A549 (cell line): ENCODE measurements at regions of chr15 and their contacts with region 1.

Region 1: DNA sequence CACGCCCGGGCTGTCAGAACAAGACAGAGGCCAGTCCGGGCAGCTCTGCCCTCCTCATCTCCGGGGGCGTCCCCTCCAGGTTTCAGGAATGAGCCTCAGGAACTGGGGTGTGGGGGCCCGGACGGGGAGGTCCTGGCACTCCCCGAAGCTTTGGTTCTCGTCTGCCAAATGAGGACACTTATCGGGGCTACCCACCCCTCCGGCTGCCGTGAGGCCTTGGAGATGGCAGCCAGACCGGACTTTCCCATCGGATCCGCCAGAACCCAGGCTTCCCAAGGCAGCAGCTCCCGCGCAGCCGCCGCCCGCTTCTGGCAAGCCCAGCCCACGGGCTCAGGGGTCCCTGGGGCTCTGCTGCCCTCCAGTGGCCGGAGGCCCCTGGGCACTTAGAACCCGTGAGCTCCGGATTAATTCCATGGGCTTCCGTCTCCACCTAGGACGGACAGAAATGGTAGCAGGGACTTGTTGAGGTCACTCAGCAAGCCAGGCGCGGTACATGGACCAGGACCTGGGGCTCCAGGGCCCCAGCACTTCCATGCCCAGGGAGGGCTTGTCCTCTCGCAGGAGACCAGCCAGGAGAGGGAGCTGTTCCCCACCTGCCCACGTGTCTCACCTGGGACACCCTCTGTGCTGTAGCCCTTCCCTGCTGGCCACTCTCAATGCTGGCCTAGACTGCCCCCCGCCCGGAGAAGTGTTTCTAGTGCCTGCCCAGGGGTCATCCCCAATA is 89.4 kb downstream of the LINGO1 start:
- DNase-seq: peak; percentile 89 to 97
- ATAC-seq: peak; percentile 82 to 95
- H3K4me3 ChIP-seq: peak overlapping the region; percentile 57
- H3K27ac ChIP-seq: peak overlapping the region; percentile 79 to 93
- H3K4me1 ChIP-seq: peaks cover 18% of the 10 kb centered on the region
- CTCF ChIP-seq: peak; percentile 100
- EP300 ChIP-seq: no peak
- POLR2A ChIP-seq: peak; percentile 83
- RAD21 ChIP-seq: peak; percentile 89 to 93

Region 2: DNA sequence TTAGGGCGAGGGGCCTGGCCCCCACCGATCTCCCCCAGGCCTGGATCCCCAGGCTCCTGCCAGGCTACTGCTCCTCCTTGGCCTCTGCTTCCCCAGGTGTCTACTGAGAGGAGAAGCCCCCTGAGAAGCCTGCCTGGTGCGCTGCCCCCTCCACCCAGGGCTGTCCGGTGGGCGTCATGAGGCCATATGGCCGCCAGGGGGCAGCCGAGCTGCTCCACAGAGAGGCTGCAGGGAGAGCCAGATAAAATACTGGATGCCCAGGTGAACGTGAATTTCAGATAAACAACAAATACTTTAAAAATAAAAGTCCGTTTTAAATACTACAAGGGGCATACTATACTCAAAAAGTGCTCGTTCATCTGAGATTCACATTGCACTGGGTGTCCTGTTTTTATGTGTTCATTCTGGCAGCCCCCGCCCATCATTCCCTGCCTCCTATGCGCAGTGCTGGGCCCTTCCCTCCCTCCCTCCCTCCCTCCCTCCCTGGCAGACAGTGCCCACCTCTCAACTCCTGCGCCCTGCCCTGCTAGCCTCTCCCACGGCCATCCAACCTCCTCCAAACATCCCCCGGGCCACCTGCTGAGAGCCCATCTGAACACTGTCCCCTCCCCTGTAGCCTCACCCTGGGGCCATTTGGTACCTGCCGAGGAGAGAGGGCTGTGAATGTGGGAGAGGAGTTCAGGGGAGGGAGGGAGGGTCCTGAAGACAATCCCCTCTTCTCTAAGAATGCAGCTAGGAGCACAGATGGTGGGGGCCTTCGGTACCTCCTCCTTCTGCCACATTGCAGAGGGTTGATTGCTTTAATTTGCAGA is 518.8 kb before region 1 on chr15:
- CTCF ChIA-PET with region 1: interaction called, 15 read pairs
- POLR2A ChIA-PET with region 1: no interaction called
- DNase-seq: peak; percentile 53 to 91
- ATAC-seq: peak; percentile 38 to 83; a peak in 3 of 6 replicates
- H3K4me3 ChIP-seq: no peak overlapping the region
- H3K27ac ChIP-seq: no peak overlapping the region
- H3K4me1 ChIP-seq: no peaks in the 10 kb centered on the region
- CTCF ChIP-seq: peak; percentile 95
- EP300 ChIP-seq: no peak
- POLR2A ChIP-seq: no peak
- RAD21 ChIP-seq: peak; percentile 85 to 88

Region 3: DNA sequence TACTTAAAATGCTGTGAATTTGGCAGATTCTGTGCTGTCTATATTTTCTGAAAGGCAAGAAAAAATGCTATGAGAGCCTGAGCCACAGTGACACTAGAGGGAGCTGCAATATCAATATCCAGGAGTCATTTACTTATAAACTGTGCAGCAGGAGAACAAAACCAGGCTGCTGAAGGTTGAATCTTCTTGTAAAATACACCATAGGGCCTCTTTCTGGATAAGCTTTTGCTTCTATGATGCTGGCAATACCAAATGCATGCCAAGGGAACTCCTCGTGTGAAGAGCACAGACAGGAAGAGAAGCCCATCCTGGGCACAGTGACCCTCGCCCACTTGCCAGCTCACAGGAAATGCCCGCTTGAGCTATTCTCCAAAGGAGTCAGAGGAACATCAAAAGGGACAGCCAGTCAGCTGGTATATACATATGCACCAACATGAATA is 424.4 kb before region 1 on chr15:
- CTCF ChIA-PET with region 1: interaction called, 88 read pairs
- POLR2A ChIA-PET with region 1: no interaction called
- DNase-seq: peak; percentile 64 to 74
- ATAC-seq: peak; percentile 83 to 93
- H3K4me3 ChIP-seq: no peak overlapping the region
- H3K27ac ChIP-seq: no peak overlapping the region
- H3K4me1 ChIP-seq: no peaks in the 10 kb centered on the region
- CTCF ChIP-seq: peak; percentile 96
- EP300 ChIP-seq: no peak
- POLR2A ChIP-seq: no peak
- RAD21 ChIP-seq: peak; percentile 93

Region 4: GRCh38 chr15:77496710-77497103 is 46.6 kb before region 1 on chr15:
- CTCF ChIA-PET with region 1: interaction called, 66 read pairs
- POLR2A ChIA-PET with region 1: interaction called, 3 read pairs
- DNase-seq: peak; percentile 75 to 89
- ATAC-seq: peak; percentile 84 to 97
- H3K4me3 ChIP-seq: no peak overlapping the region
- H3K27ac ChIP-seq: peak overlapping the region in 1 of 2 experiments; percentile 41; a peak in 3 of 6 replicates
- H3K4me1 ChIP-seq: peaks cover 11% of the 10 kb centered on the region; the same call in 2 of the 3 replicates
- CTCF ChIP-seq: peak; percentile 97
- EP300 ChIP-seq: no peak
- POLR2A ChIP-seq: no peak
- RAD21 ChIP-seq: peak; percentile 95 to 97

Region 5: GRCh38 chr15:77526791-77527778 is 16.2 kb before region 1 on chr15:
- CTCF ChIA-PET with region 1: interaction called, 97 read pairs
- POLR2A ChIA-PET with region 1: interaction called, 5 read pairs
- DNase-seq: no peak
- ATAC-seq: peak in 1 of 2 experiments; percentile 23; a peak in 2 of 6 replicates
- H3K4me3 ChIP-seq: no peak overlapping the region
- H3K27ac ChIP-seq: no peak overlapping the region; a peak in 1 of 6 replicates
- H3K4me1 ChIP-seq: no peaks in the 10 kb centered on the region
- CTCF ChIP-seq: no peak
- EP300 ChIP-seq: no peak
- POLR2A ChIP-seq: no peak
- RAD21 ChIP-seq: no peak

Region 6: GRCh38 chr15:77577366-77577950 is 34.1 kb after region 1 on chr15:
- CTCF ChIA-PET with region 1: interaction called, 70 read pairs
- POLR2A ChIA-PET with region 1: no interaction called
- DNase-seq: no peak
- ATAC-seq: peak in 1 of 2 experiments; percentile 52; a peak in 3 of 6 replicates
- H3K4me3 ChIP-seq: no peak overlapping the region
- H3K27ac ChIP-seq: no peak overlapping the region
- H3K4me1 ChIP-seq: no peaks in the 10 kb centered on the region
- CTCF ChIP-seq: no peak
- EP300 ChIP-seq: no peak
- POLR2A ChIP-seq: no peak
- RAD21 ChIP-seq: no peak

Region 7: GRCh38 chr15:77633134-77633912 is 90.0 kb after region 1 on chr15:
- CTCF ChIA-PET with region 1: interaction called, 20 read pairs
- POLR2A ChIA-PET with region 1: interaction called, 3 read pairs
- DNase-seq: peak; percentile 90 to 95
- ATAC-seq: peak; percentile 70 to 94
- H3K4me3 ChIP-seq: peak overlapping the region; percentile 50
- H3K27ac ChIP-seq: peak overlapping the region; percentile 55 to 88; a peak in 5 of 6 replicates
- H3K4me1 ChIP-seq: peaks cover 10% of the 10 kb centered on the region; the same call in 1 of the 3 replicates
- CTCF ChIP-seq: peak; percentile 100
- EP300 ChIP-seq: no peak
- POLR2A ChIP-seq: no peak; the same call in 1 of the 2 replicates
- RAD21 ChIP-seq: peak; percentile 76 to 86